ENCODE measurements at regions of chr11 and their contacts with region 1.

Region 1: DNA sequence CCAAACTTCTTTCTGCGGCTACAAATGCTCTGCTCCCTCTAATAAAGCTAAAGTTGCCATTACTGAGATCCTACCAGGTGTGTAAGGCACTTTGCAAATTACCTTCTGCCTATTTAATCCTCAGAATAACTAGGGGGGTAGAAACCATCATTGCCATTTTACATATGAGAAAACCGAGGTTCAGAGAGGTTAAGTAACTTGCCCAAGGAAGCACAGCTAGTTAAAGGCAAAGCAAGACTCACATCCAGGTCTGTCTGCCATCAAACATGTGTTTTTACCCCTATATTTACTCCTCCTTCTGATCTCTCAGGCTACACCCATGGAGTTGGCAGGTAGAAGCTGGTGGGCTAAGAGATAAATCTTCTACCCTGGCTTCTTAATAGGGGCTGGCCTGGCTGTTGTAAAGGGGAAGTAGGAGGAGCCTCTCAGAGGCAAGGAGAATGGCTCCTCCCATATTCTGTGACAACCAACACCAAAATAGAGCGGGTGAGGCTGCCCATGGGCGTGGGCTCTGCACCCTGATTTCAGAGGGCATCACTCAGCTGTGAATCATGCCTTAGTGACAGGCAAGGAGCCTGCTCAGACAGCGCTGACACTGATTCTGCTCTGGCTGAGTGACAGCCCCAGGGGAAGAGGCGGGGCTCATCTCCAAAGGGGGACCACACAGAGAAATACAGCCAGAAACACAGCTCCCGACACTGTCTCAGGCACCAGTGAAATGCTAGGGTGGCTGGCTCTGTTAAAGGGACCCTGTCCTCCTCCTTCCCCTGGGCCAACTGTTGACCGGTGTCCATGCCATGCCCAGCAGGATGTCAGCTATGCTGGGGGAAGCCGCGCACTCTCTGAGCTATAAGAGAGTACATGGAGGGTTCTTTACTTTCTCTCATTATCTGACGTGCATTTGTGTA is 106.8 kb downstream of the ABTB2 start:
- DNase-seq: no peak
- H3K4me3 ChIP-seq: no peak overlapping the region
- H3K27ac ChIP-seq: no peak overlapping the region
- H3K4me1 ChIP-seq: peaks cover 0 to 6% (median under 1%) of the 10 kb centered on the region in 4 experiments; a peak in 4 of 7 replicates
- H3K27me3 ChIP-seq: no peaks in the 10 kb centered on the region
- CTCF ChIP-seq: no peak
- EP300 ChIP-seq: no peak
- POLR2A ChIP-seq: no peak
- RAD21 ChIP-seq: no peak

Region 2: DNA sequence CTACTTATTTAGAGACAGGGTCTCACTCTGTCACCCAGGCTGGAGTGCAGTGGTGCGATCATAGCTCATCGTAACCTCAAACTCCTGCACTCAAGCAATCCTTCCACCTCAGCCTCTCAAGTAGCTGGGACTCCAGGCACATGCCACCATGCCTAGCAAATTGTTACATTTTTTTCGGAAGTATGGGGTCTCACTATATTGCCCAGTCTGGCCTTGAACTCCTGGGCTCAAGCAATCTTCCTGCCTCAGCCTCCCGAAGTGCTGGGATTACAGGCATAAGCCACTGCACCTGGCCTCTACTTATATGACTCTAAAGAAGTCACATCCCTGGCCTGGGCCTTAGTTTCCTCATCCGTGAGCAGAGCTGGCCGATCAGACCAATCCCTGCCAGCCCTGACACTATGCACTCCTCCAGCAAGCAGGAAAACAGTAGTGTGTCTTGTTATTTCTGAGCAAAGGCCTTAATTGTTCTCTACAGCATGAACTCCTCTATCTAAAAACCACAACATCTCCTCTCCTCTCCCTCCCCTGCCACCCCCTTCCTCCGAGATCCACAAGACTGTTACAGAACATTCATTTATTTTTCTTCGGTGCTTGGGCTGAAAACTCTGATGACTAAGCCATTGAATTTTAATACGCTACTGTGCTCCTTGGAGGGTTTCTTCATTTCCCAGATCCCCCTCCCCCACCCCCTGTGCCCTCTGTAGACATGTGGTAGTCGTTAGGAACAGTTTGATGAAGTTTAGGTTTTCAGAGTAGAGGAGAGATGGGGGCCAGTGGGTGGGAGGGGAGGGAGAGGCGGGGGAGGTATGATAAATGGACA is 15.3 kb after region 1 on chr11:
- CTCF ChIA-PET with region 1: interaction called, 36 read pairs
- POLR2A ChIA-PET with region 1: interaction called, 4 read pairs
- DNase-seq: no peak
- H3K4me3 ChIP-seq: no peak overlapping the region
- H3K27ac ChIP-seq: no peak overlapping the region
- H3K4me1 ChIP-seq: peaks cover 7 to 21% (median 8%) of the 10 kb centered on the region in 4 experiments
- H3K27me3 ChIP-seq: no peaks in the 10 kb centered on the region
- CTCF ChIP-seq: no peak
- EP300 ChIP-seq: no peak
- POLR2A ChIP-seq: no peak
- RAD21 ChIP-seq: no peak

Measured in H1 (cell line).